Natural killer cell (primary cell): ENCODE measurements at regions of chr16 and their contacts with region 1.

Region 1: GRCh38 chr16:1929578-1930337 is 11.5 kb upstream of the HS3ST6 start:
- DNase-seq: peak; percentile 95 to 96
- ATAC-seq: peak; percentile 99 to 100 (median 100)
- H3K4me3 ChIP-seq: peak overlapping the region; percentile 31
- H3K4me3 Mint-ChIP-seq: peak overlapping the region; percentile 72
- H3K27ac ChIP-seq: no peak overlapping the region
- H3K27ac Mint-ChIP-seq: peak overlapping the region in 1 of 2 donors; percentile 65
- H3K4me1 ChIP-seq: peaks cover 11% of the 10 kb centered on the region
- H3K4me1 Mint-ChIP-seq: no peaks in the 10 kb centered on the region
- H3K27me3 ChIP-seq: no peaks in the 10 kb centered on the region
- H3K27me3 Mint-ChIP-seq: peaks cover under 1 to 3% of the 10 kb centered on the region in 2 donors
- CTCF ChIP-seq: peak; percentile 99

Region 2: GRCh38 chr16:1772736-1773584 is 156.8 kb before region 1 on chr16 and contains the starts of genes EME2 and MRPS34:
- intact Hi-C with region 1: loop called (anchors 10 kb)
- DNase-seq: peak; percentile 79 to 89
- ATAC-seq: peak; percentile 65 to 80 (median 66)
- H3K4me3 ChIP-seq: peak within 1 kb of the TSS; percentile 61
- H3K4me3 Mint-ChIP-seq: peak within 1 kb of the TSS; percentile 97
- H3K27ac ChIP-seq: peak within 1 kb of the TSS; percentile 54
- H3K27ac Mint-ChIP-seq: peak within 1 kb of the TSS; percentile 87 to 88
- H3K4me1 ChIP-seq: peaks cover 41% of the 10 kb centered on the region
- H3K4me1 Mint-ChIP-seq: peaks cover 14 to 21% of the 10 kb centered on the region in 2 donors
- H3K27me3 ChIP-seq: no peaks in the 10 kb centered on the region
- H3K27me3 Mint-ChIP-seq: no peaks in the 10 kb centered on the region
- CTCF ChIP-seq: peak; percentile 92
- total RNA-seq, gene EME2: 30.0 to 33.8 (median 30.1) TPM
- total RNA-seq, gene MRPS34: 26.5 to 42.0 (median 41.4) TPM

Region 3: DNA sequence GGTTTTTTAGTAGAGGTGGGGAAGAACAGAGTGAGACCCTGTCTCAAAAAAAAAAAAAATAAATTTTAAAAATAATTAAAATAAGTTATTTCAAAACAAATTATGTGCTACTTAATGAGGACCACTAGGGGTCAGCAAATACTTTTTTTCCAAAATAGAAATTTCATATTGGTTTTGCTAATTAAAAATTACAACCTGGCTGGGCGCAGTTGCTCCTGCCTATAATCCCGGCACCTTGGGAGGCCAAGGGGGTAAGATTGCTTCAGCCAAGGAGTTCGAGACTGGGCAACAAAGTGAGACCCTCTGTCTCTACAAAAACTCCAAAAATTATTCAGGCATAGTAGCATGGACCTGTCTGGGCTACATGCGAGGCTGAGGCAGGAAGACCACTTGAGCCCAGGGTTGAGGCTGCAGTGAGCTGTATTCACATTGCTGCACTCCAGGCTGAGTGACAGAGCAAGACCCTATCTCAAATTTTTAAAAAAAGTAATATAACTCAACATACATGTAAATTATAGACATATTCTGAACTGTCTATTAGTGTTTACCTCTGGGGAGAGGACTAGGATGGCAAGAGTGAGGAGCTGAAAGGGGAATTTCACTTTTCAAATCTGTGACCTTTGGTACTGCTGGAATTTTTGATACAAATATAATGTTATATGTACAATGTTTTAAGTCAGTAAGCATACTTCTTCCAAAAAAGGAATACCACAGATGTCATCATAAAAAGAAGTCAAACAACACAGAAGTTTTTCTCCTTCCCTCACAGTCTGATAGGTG is 65.9 kb before region 1 on chr16:
- intact Hi-C with region 1: loop called (anchors 2 kb)
- DNase-seq: peak in 1 of 2 donors; percentile 70
- ATAC-seq: no peak
- H3K4me3 ChIP-seq: no peak overlapping the region
- H3K4me3 Mint-ChIP-seq: no peak overlapping the region
- H3K27ac ChIP-seq: no peak overlapping the region
- H3K27ac Mint-ChIP-seq: no peak overlapping the region
- H3K4me1 ChIP-seq: no peaks in the 10 kb centered on the region
- H3K4me1 Mint-ChIP-seq: no peaks in the 10 kb centered on the region
- H3K27me3 ChIP-seq: peaks cover 5% of the 10 kb centered on the region
- H3K27me3 Mint-ChIP-seq: peaks cover 23 to 26% of the 10 kb centered on the region in 2 donors
- CTCF ChIP-seq: peak; percentile 66

Region 4: DNA sequence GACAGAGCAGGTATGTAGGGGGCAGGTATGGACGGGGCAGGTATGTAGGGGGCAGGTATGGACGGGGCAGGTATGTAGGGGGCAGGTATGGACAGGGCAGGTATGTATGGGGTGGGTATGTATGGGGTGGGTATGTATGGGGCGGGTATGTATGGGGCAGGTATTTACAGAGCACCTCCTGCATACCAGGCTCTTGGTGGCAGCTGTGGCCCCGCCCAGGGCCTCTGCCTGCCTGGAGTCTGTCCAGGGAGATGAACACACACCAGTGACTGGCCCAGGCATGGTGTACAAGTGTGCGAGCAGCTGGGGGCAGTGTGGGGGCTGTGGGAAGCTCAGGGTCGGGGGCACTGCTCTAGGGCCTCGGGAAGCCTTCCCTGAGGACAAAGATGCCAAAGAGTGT is 20.3 kb after region 1 on chr16:
- intact Hi-C with region 1: no loop called
- DNase-seq: no peak
- ATAC-seq: no peak
- H3K4me3 ChIP-seq: no peak overlapping the region
- H3K4me3 Mint-ChIP-seq: no peak overlapping the region
- H3K27ac ChIP-seq: no peak overlapping the region
- H3K27ac Mint-ChIP-seq: no peak overlapping the region
- H3K4me1 ChIP-seq: no peaks in the 10 kb centered on the region
- H3K4me1 Mint-ChIP-seq: no peaks in the 10 kb centered on the region
- H3K27me3 ChIP-seq: no peaks in the 10 kb centered on the region
- H3K27me3 Mint-ChIP-seq: peaks cover 0 to 3% of the 10 kb centered on the region in 2 donors
- CTCF ChIP-seq: no peak